ENCODE measurements at regions of chr20 and their contacts with region 1.

Region 1: DNA sequence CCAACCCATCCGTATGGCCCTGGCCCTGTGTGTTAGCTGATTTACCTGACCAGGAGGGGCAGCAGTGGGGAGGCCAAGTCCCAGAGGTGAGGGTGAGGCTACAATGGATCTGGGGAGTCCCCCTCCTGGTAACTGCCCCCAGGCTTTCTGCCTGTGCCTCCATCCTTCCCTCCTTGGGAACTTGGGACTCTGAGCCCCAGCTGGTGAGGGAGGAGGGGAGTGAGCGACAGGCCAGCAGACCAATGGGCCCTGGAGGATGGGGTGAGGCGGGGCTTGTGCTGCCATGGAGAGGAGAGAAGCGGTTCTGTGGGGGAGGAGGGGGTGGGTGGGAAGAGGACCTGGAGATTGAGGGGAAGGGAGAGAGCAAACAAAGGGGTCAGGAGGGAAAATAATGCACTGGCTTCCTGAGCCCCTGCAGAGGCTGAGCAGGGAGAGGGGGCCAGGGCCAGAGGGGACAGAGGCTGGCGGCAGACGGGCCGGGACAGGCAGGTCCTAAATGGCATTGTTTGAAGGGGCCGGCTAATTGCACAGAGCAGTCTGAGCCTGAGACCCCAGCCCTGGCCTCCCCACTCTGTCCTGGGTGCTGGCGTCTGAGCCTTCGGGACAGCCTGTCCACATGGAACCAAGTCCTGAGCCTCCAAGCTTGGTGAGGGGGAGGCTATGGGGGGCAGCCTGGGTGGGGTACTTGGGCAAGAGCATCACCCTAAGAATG is 17.5 kb downstream of the DNMT3B start:
- DNase-seq: peak in 1 of 2 experiments; percentile 86
- H3K4me3 ChIP-seq: no peak overlapping the region
- H3K27ac ChIP-seq: peak overlapping the region; percentile 73; the same call in 1 of the 2 replicates
- H3K4me1 ChIP-seq: peaks cover 22 to 46% (median 30%) of the 10 kb centered on the region in 4 experiments
- H3K27me3 ChIP-seq: no peaks in the 10 kb centered on the region
- CTCF ChIP-seq: peak in 1 of 3 experiments; percentile 25; a peak in 1 of 4 replicates
- EP300 ChIP-seq: no peak
- POLR2A ChIP-seq: no peak
- RAD21 ChIP-seq: no peak

Region 2: DNA sequence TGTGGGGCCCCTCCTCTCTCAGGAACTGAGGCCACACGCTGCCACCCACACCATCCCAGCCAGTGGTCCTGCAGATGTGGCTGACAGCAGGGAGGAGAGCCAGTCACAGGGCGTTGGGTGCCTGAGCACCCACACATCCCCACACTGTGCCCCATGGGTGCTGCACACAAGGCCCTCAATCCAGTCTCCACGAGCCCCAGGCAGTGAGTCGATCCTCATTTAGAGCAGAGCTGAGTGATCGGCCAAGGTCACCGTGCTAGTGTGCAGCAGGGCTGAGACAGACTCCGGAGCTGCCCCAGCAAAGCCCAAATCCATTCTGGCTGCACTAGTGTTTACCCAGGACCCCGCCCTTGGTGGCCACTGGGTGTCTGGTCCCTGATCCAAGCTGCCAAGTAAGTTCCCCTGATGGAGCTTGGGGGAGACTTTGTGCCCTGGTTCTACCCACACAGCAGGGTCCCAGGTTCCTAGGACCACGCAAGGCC is 114.9 kb before region 1 on chr20:
- CTCF ChIA-PET with region 1: interaction called, 31 read pairs
- POLR2A ChIA-PET with region 1: interaction called, 3 read pairs
- DNase-seq: no peak
- H3K4me3 ChIP-seq: no peak overlapping the region
- H3K27ac ChIP-seq: no peak overlapping the region
- H3K4me1 ChIP-seq: peaks cover 0 to 3% (median 1%) of the 10 kb centered on the region in 4 experiments; a peak in 5 of 7 replicates
- H3K27me3 ChIP-seq: no peaks in the 10 kb centered on the region
- CTCF ChIP-seq: no peak
- EP300 ChIP-seq: no peak
- POLR2A ChIP-seq: no peak
- RAD21 ChIP-seq: no peak

Region 3: GRCh38 chr20:32697608-32698007 is 82.0 kb before region 1 on chr20:
- CTCF ChIA-PET with region 1: interaction called, 16 read pairs
- POLR2A ChIA-PET with region 1: interaction called, 10 read pairs
- DNase-seq: no peak
- H3K4me3 ChIP-seq: no peak overlapping the region
- H3K27ac ChIP-seq: no peak overlapping the region
- H3K4me1 ChIP-seq: peaks cover 0 to 4% (median 2%) of the 10 kb centered on the region in 4 experiments; a peak in 1 of 7 replicates
- H3K27me3 ChIP-seq: no peaks in the 10 kb centered on the region
- CTCF ChIP-seq: no peak
- EP300 ChIP-seq: no peak
- POLR2A ChIP-seq: no peak; a peak in 1 of 3 replicates
- RAD21 ChIP-seq: no peak

Region 4: DNA sequence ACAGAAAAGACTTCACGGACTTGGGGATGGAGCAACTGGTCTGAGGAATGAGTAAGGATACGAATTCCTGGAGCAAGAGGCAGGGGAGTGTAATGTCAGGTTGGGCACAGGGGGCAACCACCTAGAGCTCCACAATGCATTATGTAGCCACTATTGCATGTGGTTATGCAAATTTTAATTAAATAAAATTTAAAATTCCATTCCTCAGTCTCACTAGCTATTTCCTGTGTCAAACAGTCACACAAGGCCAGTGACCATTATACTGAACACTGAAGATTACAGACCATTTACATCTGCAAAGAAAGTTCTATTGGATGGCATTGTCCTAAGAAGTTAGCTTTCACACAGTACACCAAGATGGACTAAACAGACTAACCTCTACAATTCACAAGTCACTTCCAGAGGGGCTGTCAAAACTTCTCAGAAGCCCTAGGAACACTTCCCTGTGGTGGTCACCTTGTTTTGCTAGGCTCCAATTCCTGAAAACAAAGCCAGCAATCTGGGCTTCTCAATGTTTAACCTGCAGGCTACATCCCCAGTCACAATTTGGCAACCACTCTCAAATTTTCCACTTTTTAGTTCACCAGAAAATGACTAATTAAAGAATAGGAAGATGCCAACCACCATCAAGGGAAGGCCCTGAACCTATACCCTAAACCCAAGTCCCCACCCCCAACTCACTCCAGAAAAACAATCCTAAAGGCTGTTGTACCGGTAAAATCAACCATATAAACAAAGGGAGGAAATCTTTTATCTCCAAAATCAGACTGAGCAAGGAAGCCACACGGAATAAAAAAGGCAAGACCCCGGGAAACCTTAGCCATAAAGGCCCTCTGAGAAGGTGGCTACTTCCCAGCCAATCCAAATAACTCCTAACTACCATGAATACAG is 71.7 kb before region 1 on chr20:
- CTCF ChIA-PET with region 1: interaction called, 16 read pairs
- POLR2A ChIA-PET with region 1: interaction called, 9 read pairs
- DNase-seq: no peak
- H3K4me3 ChIP-seq: no peak overlapping the region
- H3K27ac ChIP-seq: no peak overlapping the region
- H3K4me1 ChIP-seq: peaks cover 2 to 19% (median 6%) of the 10 kb centered on the region in 4 experiments
- H3K27me3 ChIP-seq: no peaks in the 10 kb centered on the region
- CTCF ChIP-seq: no peak
- EP300 ChIP-seq: no peak
- POLR2A ChIP-seq: no peak
- RAD21 ChIP-seq: no peak

Region 5: DNA sequence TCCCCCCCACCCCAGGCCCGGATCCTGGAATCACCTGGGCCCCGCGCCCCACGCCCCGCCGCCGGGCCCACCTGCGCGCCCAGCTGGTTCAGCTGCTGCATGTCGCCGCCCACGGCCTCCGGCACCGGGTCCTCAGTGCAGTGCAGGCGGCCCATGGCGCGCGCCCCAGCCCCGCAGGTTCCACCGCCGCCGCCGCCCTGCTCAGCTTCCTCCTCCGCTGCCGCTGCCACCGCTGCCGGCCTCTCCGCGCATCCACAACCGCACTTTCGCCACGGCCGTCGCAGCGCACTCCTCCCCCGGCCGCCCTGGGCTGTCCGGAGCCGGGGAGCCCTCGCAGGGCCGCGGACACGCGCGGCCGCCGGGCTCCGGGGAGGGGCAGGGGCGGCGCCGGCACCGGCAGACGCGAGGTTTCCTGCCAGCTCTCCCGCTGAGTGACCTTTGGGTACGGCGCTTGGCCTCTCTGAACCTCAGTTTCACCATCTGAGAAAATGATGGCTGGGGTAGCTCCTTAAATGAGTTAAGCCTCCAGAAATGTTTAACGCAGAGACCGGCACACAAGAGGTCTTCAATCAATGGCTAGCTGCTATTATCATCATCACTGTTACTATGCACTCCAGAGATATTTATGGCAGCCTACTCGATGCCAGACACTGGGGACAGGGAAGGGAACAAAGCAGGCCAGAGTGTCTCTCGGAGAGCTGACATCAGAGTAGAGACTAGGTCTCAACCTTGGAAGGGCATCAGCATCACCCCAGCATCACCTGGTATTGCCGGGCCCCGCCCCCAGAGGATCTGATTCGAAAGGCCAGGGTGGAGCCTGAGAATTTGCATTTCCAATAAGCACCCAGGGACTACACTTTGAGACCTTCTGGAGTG is 36.2 kb before region 1 on chr20 and contains the start of gene COMMD7:
- CTCF ChIA-PET with region 1: interaction called, 78 read pairs
- POLR2A ChIA-PET with region 1: interaction called, 23 read pairs
- DNase-seq: peak in 1 of 2 experiments; percentile 80
- H3K4me3 ChIP-seq: peak within 1 kb of the TSS; percentile 59 to 84 (median 72)
- H3K27ac ChIP-seq: no peak within 1 kb of the TSS
- H3K4me1 ChIP-seq: peaks cover 5 to 14% (median 9%) of the 10 kb centered on the region in 4 experiments; a peak in 6 of 7 replicates
- H3K27me3 ChIP-seq: no peaks in the 10 kb centered on the region
- CTCF ChIP-seq: no peak
- EP300 ChIP-seq: peak in 1 of 2 experiments; percentile 24; a peak in 1 of 3 replicates
- POLR2A ChIP-seq: peak in 1 of 2 experiments; percentile 49; a peak in 1 of 3 replicates
- RAD21 ChIP-seq: no peak
- total RNA-seq, gene COMMD7: 48.8 and 48.9 TPM in 2 replicates

Region 6: GRCh38 chr20:32789896-32790750 is 10.5 kb after region 1 on chr20:
- CTCF ChIA-PET with region 1: interaction called, 88 read pairs
- POLR2A ChIA-PET with region 1: interaction called, 37 read pairs
- DNase-seq: peak in 1 of 2 experiments; percentile 78
- H3K4me3 ChIP-seq: no peak overlapping the region
- H3K27ac ChIP-seq: no peak overlapping the region
- H3K4me1 ChIP-seq: peaks cover 0 to 9% (median 2%) of the 10 kb centered on the region in 4 experiments; a peak in 4 of 7 replicates
- H3K27me3 ChIP-seq: no peaks in the 10 kb centered on the region
- CTCF ChIP-seq: peak; percentile 75 to 97 (median 96)
- EP300 ChIP-seq: no peak
- POLR2A ChIP-seq: peak in 1 of 2 experiments; percentile 74; a peak in 2 of 3 replicates
- RAD21 ChIP-seq: peak; percentile 66 to 67

Region 7: GRCh38 chr20:33584976-33585375 is 805.3 kb after region 1 on chr20:
- CTCF ChIA-PET with region 1: no interaction called
- POLR2A ChIA-PET with region 1: no interaction called
- DNase-seq: no peak
- H3K4me3 ChIP-seq: no peak overlapping the region
- H3K27ac ChIP-seq: no peak overlapping the region
- H3K4me1 ChIP-seq: peaks cover 0 to 6% (median 0%) of the 10 kb centered on the region in 4 experiments; a peak in 1 of 7 replicates
- H3K27me3 ChIP-seq: no peaks in the 10 kb centered on the region
- CTCF ChIP-seq: no peak
- EP300 ChIP-seq: no peak
- POLR2A ChIP-seq: no peak
- RAD21 ChIP-seq: no peak

Measured in H1 (cell line).